Dorsolateral prefrontal cortex (tissue), 120 donors: ENCODE measurements at regions of chr15 and their contacts with region 1.

Region 1: DNA sequence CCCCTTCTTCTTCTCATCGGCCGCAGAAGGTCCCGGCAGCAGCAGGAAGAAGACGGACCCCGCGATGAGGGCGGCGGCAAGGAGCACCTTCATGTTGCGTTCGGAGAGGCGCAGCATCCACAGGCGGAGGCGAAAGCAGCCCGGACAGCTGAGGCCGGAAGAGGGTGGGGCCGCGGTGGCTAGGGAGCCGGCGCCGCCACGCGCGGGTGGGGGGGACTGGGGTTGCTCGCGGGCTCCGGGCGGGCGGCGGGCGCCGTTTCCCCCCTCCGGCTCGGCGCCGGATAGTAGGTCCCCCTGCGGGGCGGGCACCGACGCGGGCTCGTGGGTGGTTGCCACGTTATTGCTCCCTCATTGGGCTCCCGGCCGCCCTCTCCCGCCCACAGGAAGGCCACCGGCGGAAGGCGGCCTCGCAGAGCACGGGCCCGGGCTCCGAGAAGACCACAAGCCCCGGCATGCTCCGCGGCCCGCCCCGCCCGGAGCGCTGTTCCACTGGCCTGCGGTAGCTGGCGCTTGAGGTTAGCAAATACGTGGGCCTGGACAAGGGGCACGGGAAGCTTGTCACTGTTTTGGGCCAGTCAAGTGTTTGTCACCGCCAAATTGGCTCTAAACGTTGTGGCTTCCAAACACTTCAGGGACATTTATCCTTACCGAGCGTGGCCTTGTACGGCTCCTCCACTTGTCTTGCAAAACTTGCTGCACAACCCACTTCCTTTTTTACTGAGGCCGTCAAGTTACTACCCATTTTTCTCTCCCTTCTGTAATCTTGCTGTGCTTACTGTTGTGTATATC is at the start of gene PPIB:
- DNase-seq: peak; percentile 96 to 99 (median 98)
- H3K4me3 ChIP-seq: peak within 1 kb of the TSS; percentile 66 to 99 (median 93)
- H3K27ac ChIP-seq: peak within 1 kb of the TSS; percentile 71 to 96 (median 92)
- H3K27me3 ChIP-seq: no peaks in the 10 kb centered on the region
- CTCF ChIP-seq: peak; percentile 18 to 80 (median 65)
- total RNA-seq, gene PPIB: 75.2 to 173 (median 106) TPM

Region 2: DNA sequence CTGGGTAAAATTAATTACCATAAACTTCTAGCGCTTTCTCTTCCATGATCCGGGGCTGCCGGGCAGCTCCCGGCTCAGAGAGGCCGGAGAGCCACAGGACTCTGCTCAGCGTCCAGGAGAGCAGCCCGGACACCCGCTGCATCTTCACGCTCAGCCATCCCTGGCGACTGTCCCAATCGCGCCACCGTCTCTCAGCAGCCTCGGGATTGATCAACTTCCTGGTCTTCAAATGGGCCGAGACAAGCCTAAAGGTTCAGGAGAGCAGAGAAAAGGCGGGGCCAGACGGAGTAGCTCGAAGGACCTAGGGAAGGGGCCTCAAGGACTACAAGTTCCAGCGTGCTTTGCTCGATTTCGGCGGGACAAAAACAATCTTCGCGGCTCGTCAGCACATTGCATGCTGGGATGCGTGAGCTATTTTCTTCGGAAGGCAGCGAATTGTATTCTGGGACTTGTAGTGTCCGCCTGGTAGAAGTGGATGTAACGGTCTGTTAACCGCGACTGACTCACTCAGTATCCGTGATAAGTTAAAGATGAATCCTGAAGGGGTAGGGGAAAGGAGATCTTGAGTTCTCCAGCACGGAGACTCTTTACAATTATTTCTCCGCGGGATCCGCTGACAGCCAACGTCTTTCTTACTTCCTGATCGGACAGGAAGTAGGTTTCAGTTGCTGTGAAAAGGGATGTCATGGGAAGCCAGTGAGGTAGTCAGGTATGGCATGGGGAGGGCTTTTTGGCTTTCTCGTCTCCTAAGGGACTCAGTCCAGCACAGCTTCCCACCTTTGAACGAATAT is 69.2 kb before region 1 on chr15 and contains the start of gene CIAO2A:
- intact Hi-C with region 1: loop called in 1 of 2 experiments (anchors 2 kb)
- DNase-seq: peak; percentile 83 to 97 (median 96)
- H3K4me3 ChIP-seq: peak within 1 kb of the TSS; percentile 51 to 99 (median 83)
- H3K27ac ChIP-seq: peak within 1 kb of the TSS; percentile 79 to 98 (median 94)
- H3K27me3 ChIP-seq: no peaks in the 10 kb centered on the region
- CTCF ChIP-seq: peak in 26 of 56 donors; percentile 3 to 55 (median 20)
- total RNA-seq, gene CIAO2A: 13.7 to 37.5 (median 22.9) TPM

Region 3: DNA sequence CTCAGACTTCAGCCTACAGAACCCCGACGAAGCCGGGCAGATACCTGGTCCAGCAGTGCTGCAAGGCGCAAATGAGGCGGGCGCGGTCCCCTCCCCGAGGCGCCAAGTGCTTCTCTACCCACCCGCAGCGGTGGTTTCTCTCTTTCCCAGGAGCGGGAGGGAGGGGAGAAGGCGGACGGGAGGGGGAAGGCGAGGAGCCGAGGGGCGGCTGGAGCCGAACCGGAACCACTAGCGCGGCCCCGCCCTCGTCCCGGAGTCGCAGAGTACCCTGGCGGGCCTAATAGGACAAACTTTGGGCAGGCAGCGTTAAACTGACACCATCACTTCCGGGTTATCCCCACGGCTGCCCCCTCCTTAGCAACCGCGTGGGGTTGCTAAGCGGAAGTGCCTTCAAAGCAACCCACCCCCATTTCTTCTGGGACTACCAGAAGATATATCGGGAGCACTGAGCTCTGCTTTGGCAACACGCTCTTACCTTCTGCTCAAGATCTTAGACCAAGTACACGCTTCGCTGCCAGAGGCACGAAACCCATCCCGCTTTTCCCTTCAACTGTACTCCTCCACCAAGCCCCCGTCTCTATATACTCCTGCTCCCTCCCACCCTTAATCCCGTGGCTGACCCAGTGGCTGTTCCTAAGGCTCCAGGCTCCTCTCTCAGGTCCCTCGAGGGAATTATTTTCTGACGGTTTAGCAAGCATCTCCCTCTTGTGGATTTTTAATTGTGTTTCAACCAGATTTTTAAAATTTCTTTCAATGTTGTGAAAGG is 193.1 kb after region 1 on chr15 and contains the start of gene CSNK1G1:
- intact Hi-C with region 1: loop called (anchors 2 kb)
- DNase-seq: peak; percentile 93 to 98 (median 97)
- H3K4me3 ChIP-seq: peak within 1 kb of the TSS; percentile 61 to 94 (median 82)
- H3K27ac ChIP-seq: peak within 1 kb of the TSS in 49 of 59 donors; percentile 1 to 83 (median 59)
- H3K27me3 ChIP-seq: no peaks in the 10 kb centered on the region
- CTCF ChIP-seq: peak in 49 of 56 donors; percentile 9 to 64 (median 40)
- total RNA-seq, gene CSNK1G1: 15.7 to 35.5 (median 25.7) TPM

Region 4: DNA sequence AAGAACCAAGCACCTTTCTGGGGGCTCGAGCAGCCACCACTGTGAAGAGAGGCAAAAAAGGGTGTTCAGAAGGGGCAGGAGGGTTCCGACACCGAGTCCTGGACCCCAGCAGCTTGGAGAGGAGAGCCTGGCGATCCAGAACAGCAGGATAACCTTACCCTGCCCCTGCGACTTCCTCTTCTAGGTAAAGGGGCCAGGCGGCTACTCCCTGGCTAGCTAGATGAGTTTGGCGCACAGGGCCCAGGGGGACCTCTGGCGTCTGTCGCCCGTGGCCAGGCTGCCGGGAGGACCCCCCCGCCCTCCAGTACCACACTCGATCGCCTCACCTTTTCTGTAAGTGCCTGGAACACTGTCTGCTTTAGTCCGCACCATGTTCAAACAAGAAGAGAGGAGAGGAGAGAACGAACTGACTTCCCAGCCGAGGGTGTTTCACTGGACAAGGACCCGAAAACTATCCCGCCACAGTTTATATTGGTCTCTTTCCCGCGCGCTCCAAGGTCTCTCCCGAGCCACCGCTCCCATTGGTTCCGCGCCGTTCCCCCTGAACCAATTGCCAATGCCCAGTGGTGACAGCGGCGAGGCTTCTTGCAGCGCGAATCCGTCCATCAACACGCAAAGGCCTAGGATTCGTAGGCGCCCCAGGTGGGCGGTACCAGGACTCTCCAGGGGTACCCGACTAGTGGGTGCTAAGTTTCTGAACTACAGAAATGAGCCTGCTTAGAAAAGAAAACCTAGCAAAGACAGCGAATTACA is 218.1 kb after region 1 on chr15 and contains the start of gene PCLAF:
- intact Hi-C with region 1: loop called in 1 of 2 experiments (anchors 5 kb)
- DNase-seq: peak; percentile 81 to 94 (median 92)
- H3K4me3 ChIP-seq: peak within 1 kb of the TSS; percentile 36 to 82 (median 62)
- H3K27ac ChIP-seq: no peak within 1 kb of the TSS
- H3K27me3 ChIP-seq: no peaks in the 10 kb centered on the region
- CTCF ChIP-seq: peak in 20 of 56 donors; percentile 11 to 41 (median 23)
- total RNA-seq, gene PCLAF: 0.24 to 3.6 (median 1.2) TPM in 89 of 120 experiments, not detected in the others

Region 5: DNA sequence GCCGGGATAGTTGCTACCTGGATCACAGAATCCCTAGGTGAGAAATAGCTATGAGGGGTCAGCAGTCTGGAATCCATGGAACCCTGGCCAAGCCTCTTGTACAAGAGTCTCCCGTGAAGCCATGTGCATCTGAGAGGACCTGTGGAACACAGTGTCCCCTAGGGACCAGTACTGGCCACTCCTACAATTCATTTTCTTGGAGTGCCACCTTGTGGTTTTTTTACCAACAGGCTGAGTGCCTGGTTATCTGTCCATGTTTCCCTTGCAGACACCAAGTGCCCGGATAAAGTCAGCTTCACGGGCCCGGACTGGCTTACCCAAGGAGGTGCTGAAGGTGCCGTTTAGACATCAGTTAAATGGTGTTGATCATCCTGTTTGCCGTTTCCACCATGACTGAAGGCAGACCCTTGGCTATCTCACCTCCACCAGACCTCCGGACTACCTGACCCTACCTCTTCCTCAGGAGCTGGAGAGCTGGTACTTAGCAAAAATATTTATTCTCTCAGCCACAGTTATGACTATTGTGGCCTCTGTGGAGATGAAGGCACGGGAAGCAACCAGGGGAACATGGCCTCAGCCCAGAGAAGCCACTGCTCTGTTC is 518.5 kb after region 1 on chr15:
- intact Hi-C with region 1: loop called (anchors 5 to 10 kb)
- DNase-seq: peak in 6 of 10 donors; percentile 26 to 63 (median 49)
- H3K4me3 ChIP-seq: no peak overlapping the region
- H3K27ac ChIP-seq: peak overlapping the region in 24 of 59 donors; percentile 5 to 61 (median 34)
- H3K27me3 ChIP-seq: no peaks in the 10 kb centered on the region
- CTCF ChIP-seq: peak; percentile 65 to 93 (median 86)